Sciatic nerve (tissue), 2 donors: ENCODE measurements at regions of chr11 and their contacts with region 1.

Region 1: DNA sequence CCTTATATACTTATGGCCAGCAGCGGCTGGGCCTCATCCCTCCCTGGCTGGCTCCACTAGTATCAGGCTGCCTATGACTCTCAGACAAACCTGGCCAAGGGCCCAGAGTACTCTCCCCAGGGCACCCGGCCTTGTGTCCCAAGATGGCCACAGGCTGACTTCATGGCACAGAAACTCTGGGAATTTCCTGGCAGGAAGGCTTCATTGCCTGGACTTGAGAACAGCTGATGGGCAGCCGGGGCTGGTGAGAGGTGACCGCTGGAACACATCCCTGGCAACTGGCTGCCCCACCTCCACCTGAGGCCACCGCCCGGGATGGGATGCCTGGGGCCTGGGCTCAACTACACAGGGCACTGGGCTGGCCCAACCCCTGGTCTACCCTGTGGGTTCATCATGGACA is 3.3 kb downstream of the FADS3 start:
- DNase-seq: peak; percentile 79
- ATAC-seq: peak; percentile 46

Region 2: GRCh38 chr11:61627567-61628445 is 260.2 kb before region 1 on chr11:
- intact Hi-C with region 1: no loop called
- DNase-seq: peak; percentile 74
- ATAC-seq: peak; percentile 70

Region 3: DNA sequence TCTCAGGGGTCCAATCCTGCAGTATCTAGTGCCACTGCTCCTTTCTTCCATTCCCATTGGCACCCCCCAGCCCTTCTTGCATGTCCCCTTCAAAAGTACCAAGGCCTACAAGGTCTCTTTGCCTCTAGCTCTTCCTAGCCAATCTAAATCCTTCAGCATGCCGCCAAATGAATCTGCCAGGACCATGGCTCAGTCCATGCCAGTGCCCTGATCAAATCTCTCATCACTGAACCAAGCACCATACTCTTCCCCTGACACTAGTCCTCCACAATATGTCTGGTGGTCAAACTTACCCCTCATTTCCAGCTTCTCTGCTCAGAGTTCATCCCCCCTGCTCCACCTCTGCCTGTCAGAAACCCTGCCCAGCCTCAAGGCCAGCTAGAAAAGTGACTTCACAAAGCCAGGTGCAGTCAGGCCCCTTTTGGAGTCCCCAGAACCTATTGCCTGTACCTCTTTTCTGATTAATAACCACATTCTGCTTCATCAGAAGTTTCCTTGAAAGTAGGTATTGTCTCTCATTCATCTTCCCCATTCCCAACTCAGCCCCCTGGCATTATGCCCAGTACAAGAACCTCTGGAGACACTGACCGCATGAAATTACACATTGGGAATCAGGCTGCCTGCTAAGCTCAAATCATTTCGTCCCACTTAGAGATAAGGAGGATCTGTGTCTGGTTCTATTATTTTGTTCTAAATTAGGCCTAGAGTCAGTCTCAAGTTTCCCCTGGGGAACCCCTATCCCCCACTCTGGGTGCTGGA is 84.0 kb before region 1 on chr11:
- intact Hi-C with region 1: loop called (anchors 10 kb)
- DNase-seq: no peak
- ATAC-seq: no peak

Region 4: GRCh38 chr11:62061351-62062222 is 173.5 kb after region 1 on chr11:
- intact Hi-C with region 1: no loop called
- DNase-seq: no peak
- ATAC-seq: peak; percentile 91